ENCODE measurements at regions of chr1 and their contacts with region 1.

Region 1: GRCh38 chr1:82549822-82550221 is 749.1 kb downstream of the ADGRL2 start:
- DNase-seq: no peak
- ATAC-seq: no peak
- H3K4me3 Mint-ChIP-seq: no peak overlapping the region
- H3K27ac Mint-ChIP-seq: no peak overlapping the region
- H3K4me1 Mint-ChIP-seq: no peaks in the 10 kb centered on the region
- H3K27me3 Mint-ChIP-seq: no peaks in the 10 kb centered on the region

Region 2: GRCh38 chr1:82538876-82539275 is 10.9 kb before region 1 on chr1:
- POLR2A ChIA-PET with region 1: no interaction called
- DNase-seq: no peak
- ATAC-seq: no peak
- H3K4me3 Mint-ChIP-seq: no peak overlapping the region
- H3K27ac Mint-ChIP-seq: no peak overlapping the region
- H3K4me1 Mint-ChIP-seq: no peaks in the 10 kb centered on the region
- H3K27me3 Mint-ChIP-seq: no peaks in the 10 kb centered on the region

Region 3: DNA sequence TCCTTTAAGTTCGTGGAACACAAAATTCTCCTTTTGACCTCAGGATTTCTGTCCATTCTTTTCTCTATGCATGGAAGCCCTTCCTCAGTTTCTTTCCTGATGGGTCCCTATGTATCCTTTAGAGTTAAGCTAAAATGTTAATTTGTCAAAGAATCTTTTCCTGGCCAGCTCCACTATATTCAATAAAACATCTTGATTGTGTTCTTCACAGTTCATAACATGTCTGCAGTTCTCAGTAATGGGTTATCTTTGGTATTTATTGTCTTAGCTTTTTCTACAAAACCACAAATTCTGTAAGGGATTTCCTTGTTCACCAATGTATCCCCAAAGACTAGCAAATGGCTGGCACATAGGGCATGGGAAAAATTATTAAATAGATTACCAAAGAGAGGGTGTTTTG is 249.4 kb after region 1 on chr1:
- POLR2A ChIA-PET with region 1: interaction called, 10 read pairs
- DNase-seq: no peak
- ATAC-seq: no peak
- H3K4me3 Mint-ChIP-seq: no peak overlapping the region
- H3K27ac Mint-ChIP-seq: no peak overlapping the region
- H3K4me1 Mint-ChIP-seq: no peaks in the 10 kb centered on the region
- H3K27me3 Mint-ChIP-seq: no peaks in the 10 kb centered on the region